PC-3 (cell line): ENCODE measurements at regions of chr10 and their contacts with region 1.

Region 1: GRCh38 chr10:101782811-101783735 is at the start of gene NPM3:
- DNase-seq: peak; percentile 64
- ATAC-seq: peak; percentile 70
- H3K4me3 ChIP-seq: peak within 1 kb of the TSS; percentile 95
- H3K27ac ChIP-seq: peak within 1 kb of the TSS; percentile 59
- H3K4me1 ChIP-seq: peaks cover 20% of the 10 kb centered on the region
- H3K27me3 ChIP-seq: no peaks in the 10 kb centered on the region
- CTCF ChIP-seq: no peak
- total RNA-seq, gene NPM3: 117 and 128 TPM in 2 replicates

Region 2: DNA sequence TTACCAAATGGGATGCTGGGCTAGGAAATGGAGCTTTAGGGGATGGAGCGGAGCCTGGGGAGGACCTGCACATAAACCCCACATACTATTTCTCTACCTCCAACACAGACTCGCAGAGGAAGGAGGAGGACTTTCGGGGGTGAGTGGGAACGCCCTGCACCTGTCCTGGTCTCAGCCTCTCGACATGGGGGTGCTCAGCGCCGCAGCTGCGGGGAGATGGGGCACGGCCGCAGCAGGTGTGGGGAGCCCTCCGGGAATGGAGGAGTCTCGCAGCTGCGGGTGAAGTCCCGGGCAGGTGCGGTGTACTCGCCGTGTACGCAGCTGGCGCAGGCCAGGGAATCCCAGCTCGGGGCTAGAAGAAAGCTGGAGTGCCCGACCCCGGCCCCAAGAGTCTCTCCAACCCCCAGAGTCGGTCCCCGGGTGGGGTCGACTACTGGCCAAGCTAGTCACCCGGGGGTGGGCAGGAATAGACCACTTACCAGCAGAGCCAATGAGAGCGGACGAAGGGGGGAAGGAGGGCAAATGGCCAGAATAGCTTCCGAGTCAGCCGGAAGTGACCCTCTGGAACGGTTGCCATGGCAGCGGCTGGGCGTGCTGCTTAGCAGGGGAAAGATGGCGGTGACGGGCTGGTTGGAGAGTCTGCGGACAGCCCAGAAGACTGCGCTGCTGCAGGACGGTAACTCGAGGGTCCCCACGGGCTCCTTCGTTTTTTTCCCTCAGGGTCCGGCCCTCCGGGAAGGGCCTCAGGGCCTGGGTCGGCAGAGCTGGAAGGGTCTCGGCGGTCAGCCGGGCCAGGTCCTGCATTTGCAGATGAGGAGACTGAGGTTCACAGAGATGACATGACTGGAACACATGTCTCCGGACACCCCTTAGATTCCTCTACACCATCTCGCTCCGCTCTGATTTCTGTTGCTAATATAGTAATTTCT is 195.1 kb before region 1 on chr10 and contains the starts of genes DPCD and POLL:
- CTCF ChIA-PET with region 1: no interaction called
- POLR2A ChIA-PET with region 1: no interaction called
- intact Hi-C with region 1: loop called (anchors 5 kb)
- DNase-seq: peak; percentile 90
- ATAC-seq: peak; percentile 96
- H3K4me3 ChIP-seq: peak within 1 kb of the TSS; percentile 98
- H3K27ac ChIP-seq: no peak within 1 kb of the TSS
- H3K4me1 ChIP-seq: peaks cover 13% of the 10 kb centered on the region
- H3K27me3 ChIP-seq: no peaks in the 10 kb centered on the region
- CTCF ChIP-seq: no peak
- total RNA-seq, gene DPCD: 37.1 and 44.2 TPM in 2 replicates
- total RNA-seq, gene POLL: 10.9 and 13.1 TPM in 2 replicates

Region 3: GRCh38 chr10:101602761-101603398 is 180.2 kb before region 1 on chr10:
- CTCF ChIA-PET with region 1: interaction called, 18 read pairs
- POLR2A ChIA-PET with region 1: no interaction called
- intact Hi-C with region 1: loop called (anchors 1 kb)
- DNase-seq: peak; percentile 76
- ATAC-seq: peak; percentile 91
- H3K4me3 ChIP-seq: no peak overlapping the region
- H3K27ac ChIP-seq: no peak overlapping the region
- H3K4me1 ChIP-seq: no peaks in the 10 kb centered on the region
- H3K27me3 ChIP-seq: no peaks in the 10 kb centered on the region
- CTCF ChIP-seq: peak; percentile 89

Region 4: GRCh38 chr10:101736666-101737065 is 46.4 kb before region 1 on chr10:
- CTCF ChIA-PET with region 1: no interaction called
- POLR2A ChIA-PET with region 1: no interaction called
- intact Hi-C with region 1: no loop called
- DNase-seq: no peak
- ATAC-seq: no peak
- H3K4me3 ChIP-seq: no peak overlapping the region
- H3K27ac ChIP-seq: no peak overlapping the region
- H3K4me1 ChIP-seq: no peaks in the 10 kb centered on the region; the same call in 1 of the 2 replicates
- H3K27me3 ChIP-seq: no peaks in the 10 kb centered on the region
- CTCF ChIP-seq: no peak